Aorta (tissue), 5 donors: ENCODE measurements at regions of chr21 and their contacts with region 1.

Region 1: GRCh38 chr21:40481764-40482163 is 365.2 kb downstream of the DSCAM start:
- DNase-seq: no peak
- ATAC-seq: no peak
- H3K4me3 ChIP-seq: no peak overlapping the region
- H3K27ac ChIP-seq: no peak overlapping the region
- H3K4me1 ChIP-seq: no peaks in the 10 kb centered on the region
- H3K27me3 ChIP-seq: no peaks in the 10 kb centered on the region

Region 2: GRCh38 chr21:40129809-40130208 is 352.0 kb before region 1 on chr21:
- intact Hi-C with region 1: loop called in 1 of 2 experiments (anchors 10 kb)
- DNase-seq: no peak
- ATAC-seq: no peak
- H3K4me3 ChIP-seq: no peak overlapping the region
- H3K27ac ChIP-seq: no peak overlapping the region
- H3K4me1 ChIP-seq: no peaks in the 10 kb centered on the region
- H3K27me3 ChIP-seq: peaks cover 0 to 1% of the 10 kb centered on the region in 2 donors

Region 3: DNA sequence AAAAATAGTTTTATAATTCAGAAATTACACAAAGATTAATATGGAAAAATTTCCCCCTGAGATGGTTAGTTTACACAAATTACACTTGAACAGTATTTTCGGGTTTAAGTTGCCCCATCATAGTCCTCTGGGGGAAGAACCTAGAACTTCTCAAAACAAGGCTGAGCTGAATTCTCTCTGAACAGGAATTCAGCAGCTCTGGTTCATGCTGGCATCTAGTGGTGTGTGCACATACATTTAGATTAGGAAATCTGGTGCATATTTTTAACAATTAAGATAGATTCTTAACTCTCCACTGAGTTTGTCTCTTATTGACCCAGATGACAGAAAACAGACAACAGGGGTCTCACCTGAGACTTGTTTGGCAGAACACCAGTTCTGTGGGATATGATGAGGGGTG is 45.5 kb before region 1 on chr21:
- intact Hi-C with region 1: no loop called
- DNase-seq: no peak
- ATAC-seq: no peak
- H3K4me3 ChIP-seq: no peak overlapping the region
- H3K27ac ChIP-seq: no peak overlapping the region
- H3K4me1 ChIP-seq: no peaks in the 10 kb centered on the region
- H3K27me3 ChIP-seq: no peaks in the 10 kb centered on the region

Region 4: GRCh38 chr21:40681164-40681859 is 199.5 kb after region 1 on chr21:
- intact Hi-C with region 1: no loop called
- DNase-seq: no peak
- ATAC-seq: no peak
- H3K4me3 ChIP-seq: no peak overlapping the region
- H3K27ac ChIP-seq: no peak overlapping the region
- H3K4me1 ChIP-seq: no peaks in the 10 kb centered on the region
- H3K27me3 ChIP-seq: no peaks in the 10 kb centered on the region

Region 5: DNA sequence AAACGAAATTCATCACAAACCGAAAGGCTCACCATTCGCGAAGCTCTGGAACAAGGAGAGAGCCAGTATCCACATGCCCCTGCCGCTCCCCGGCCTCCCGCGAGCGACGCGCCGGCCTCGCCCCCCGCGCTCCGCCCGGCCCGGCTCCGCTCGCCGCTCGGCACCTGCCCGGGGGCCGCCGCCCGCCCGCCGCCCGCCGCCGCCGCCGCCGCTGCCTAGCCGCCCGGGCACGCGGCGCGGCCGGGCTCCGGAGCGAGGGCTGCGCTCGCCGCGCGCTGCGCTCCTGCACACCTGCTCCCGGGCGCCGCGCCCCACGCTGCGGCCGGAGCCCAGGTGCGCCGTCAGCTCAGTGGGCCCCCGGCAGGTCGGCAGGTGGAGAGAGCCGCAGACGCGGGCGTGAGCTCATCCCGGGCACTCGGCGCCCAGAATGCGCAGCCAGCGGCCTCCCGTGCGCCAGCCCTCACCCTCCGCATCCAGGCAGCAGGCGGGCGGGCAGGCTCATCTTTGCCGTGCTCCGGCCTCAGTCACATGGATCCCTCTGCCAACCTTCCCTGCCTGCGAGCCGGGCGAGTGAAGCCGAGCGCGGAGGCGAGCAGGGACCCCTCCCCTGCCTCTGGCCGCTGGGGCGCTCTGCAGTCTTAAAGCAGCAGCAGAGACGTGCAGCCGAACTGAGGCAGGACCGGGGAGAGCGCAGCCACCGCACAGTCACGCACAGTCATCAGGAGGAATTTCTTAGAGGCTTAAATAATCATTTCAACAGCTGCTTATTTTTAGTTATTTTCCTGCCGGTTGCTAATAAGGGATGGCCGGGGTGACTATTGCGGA is 365.0 kb after region 1 on chr21 and contains the start of gene DSCAM:
- intact Hi-C with region 1: no loop called
- DNase-seq: no peak
- ATAC-seq: no peak
- H3K4me3 ChIP-seq: no peak within 1 kb of the TSS
- H3K27ac ChIP-seq: no peak within 1 kb of the TSS
- H3K4me1 ChIP-seq: no peaks in the 10 kb centered on the region
- H3K27me3 ChIP-seq: no peaks in the 10 kb centered on the region
- total RNA-seq, gene DSCAM: not detected